ENCODE measurements at regions of chr11 and their contacts with region 1.

Region 1: DNA sequence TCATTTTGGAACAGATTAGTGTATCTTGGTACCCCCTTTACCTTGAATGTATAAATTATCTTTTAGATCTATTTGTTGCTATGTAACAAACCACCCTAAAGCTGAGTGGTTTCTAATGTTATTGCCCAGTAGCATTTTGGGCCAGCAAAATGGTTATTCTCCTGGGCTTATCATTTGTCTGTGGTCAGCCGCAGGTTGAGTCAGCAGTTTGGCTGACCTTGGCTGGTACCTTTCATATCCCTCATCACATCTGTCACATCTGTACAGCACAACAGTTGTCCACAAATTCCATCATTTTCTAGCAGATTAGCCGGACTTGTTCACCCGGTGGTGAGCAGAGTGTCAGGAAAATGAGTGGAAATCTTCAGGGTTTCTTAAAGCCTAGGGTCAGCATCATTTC is 588.5 kb upstream of the ARHGAP42 start:
- DNase-seq: no peak
- H3K4me3 ChIP-seq: no peak overlapping the region
- H3K27ac ChIP-seq: no peak overlapping the region
- H3K4me1 ChIP-seq: no peaks in the 10 kb centered on the region
- H3K27me3 ChIP-seq: no peaks in the 10 kb centered on the region
- CTCF ChIP-seq: no peak
- POLR2A ChIP-seq: no peak

Region 2: GRCh38 chr11:100061006-100061405 is 37.6 kb before region 1 on chr11:
- intact Hi-C with region 1: loop called (anchors 5 kb)
- DNase-seq: no peak
- H3K4me3 ChIP-seq: no peak overlapping the region
- H3K27ac ChIP-seq: no peak overlapping the region
- H3K4me1 ChIP-seq: no peaks in the 10 kb centered on the region
- H3K27me3 ChIP-seq: no peaks in the 10 kb centered on the region
- CTCF ChIP-seq: no peak
- POLR2A ChIP-seq: no peak

Region 3: GRCh38 chr11:100141201-100141600 is 42.6 kb after region 1 on chr11:
- intact Hi-C with region 1: no loop called
- DNase-seq: no peak
- H3K4me3 ChIP-seq: no peak overlapping the region
- H3K27ac ChIP-seq: no peak overlapping the region
- H3K4me1 ChIP-seq: no peaks in the 10 kb centered on the region
- H3K27me3 ChIP-seq: no peaks in the 10 kb centered on the region
- CTCF ChIP-seq: no peak
- POLR2A ChIP-seq: no peak

Region 4: DNA sequence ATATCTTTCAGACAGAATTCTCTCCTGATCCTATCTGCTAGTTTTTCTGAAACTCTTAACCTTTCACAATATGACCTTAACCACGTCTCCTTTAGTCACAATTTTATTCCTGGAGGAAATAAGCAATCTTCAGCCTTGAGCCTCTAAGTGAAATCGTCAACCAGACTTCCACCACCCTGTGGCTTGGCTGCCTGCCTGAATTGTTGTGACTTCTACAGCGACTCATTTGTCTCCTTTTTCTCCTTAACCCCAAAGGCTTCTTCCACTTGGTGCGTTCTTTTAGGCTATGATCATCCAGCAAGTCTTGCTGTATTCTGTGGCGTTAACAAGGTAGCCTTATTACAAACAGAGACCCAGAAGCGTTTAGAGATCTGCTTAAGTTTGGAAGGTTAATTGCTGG is 53.4 kb after region 1 on chr11:
- intact Hi-C with region 1: loop called (anchors 5 kb)
- DNase-seq: no peak
- H3K4me3 ChIP-seq: no peak overlapping the region
- H3K27ac ChIP-seq: peak overlapping the region; percentile 20 to 65
- H3K4me1 ChIP-seq: no peaks in the 10 kb centered on the region
- H3K27me3 ChIP-seq: no peaks in the 10 kb centered on the region
- CTCF ChIP-seq: no peak
- POLR2A ChIP-seq: no peak

Region 5: DNA sequence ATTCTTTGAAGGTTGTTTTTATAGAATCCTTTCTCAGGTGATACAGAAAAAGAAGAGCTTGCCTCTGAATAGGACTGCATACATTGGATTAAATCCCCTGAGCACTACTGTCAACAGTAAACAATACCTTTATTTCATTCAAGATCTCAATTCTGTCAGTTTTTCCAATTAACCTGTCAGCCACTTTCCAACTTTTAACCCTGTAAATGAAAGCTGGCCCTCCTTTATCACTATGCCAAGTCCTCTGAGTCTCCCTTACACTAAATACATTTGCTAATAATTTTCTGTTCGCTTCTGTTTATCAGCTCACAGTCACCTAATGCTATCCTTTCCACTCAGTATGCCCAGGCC is 374.8 kb after region 1 on chr11:
- intact Hi-C with region 1: no loop called
- DNase-seq: no peak
- H3K4me3 ChIP-seq: no peak overlapping the region
- H3K27ac ChIP-seq: no peak overlapping the region
- H3K4me1 ChIP-seq: no peaks in the 10 kb centered on the region
- H3K27me3 ChIP-seq: no peaks in the 10 kb centered on the region
- CTCF ChIP-seq: no peak
- POLR2A ChIP-seq: no peak

Region 6: DNA sequence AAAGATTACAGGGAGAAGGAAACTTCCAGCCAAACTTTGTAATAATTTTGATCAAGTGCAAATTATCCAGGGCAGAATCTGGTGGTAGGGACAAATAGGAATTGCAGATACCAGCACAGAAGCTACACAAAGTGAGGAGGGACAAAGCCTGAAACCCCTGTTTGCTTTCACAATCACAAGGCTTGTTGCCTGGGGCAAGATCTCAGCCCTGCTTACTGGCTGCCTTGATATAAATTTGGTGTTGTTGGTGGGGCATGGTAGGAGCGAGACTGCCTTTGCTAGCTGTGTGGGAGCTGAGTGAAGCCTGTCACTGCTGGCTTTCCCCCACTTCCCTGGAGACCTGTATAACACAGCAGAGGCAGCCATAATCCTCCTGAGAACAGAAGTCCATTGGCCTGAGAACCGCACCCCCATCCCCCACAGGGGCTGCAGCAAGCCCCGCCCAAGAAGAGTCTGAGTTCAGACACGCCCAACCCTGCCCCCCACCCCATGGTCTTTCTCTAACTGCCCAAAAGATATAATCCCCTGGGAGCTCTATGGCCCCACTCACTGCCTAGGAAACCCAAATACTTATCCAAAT is 549.2 kb after region 1 on chr11:
- intact Hi-C with region 1: no loop called
- DNase-seq: no peak
- H3K4me3 ChIP-seq: no peak overlapping the region
- H3K27ac ChIP-seq: no peak overlapping the region
- H3K4me1 ChIP-seq: peaks cover 0 to 4% of the 10 kb centered on the region in 2 donors
- H3K27me3 ChIP-seq: no peaks in the 10 kb centered on the region
- CTCF ChIP-seq: no peak
- POLR2A ChIP-seq: no peak